ENCODE measurements at regions of chr3 and their contacts with region 1.

Region 1: GRCh38 chr3:182713743-182714517 is 79.4 kb upstream of the ATP11B start:
- DNase-seq: peak; percentile 62
- H3K4me3 ChIP-seq: no peak overlapping the region
- H3K27ac ChIP-seq: no peak overlapping the region
- H3K4me1 ChIP-seq: no peaks in the 10 kb centered on the region; a peak in 1 of 4 replicates
- H3K27me3 ChIP-seq: no peaks in the 10 kb centered on the region
- CTCF ChIP-seq: peak; percentile 69
- EP300 ChIP-seq: no peak
- RAD21 ChIP-seq: peak; percentile 93

Region 2: DNA sequence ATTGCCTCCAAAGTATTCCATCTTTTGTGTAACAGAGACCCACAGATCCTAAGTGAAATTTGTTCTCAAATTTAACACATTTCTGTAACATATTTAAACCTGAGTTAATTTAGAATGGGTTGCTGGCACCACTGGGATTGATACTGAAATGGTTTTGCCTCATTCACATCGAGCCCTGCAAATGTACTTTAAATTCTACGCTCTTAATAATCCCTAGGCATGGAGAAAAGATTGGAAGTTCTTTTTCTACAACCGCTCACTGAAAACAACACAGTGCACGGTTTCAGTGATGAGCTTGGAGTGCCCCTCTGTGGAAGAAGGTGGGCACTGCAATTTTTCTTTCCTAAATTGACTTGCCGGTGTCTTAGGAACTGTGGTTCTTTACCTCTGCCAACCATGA is 30.5 kb before region 1 on chr3:
- CTCF ChIA-PET with region 1: interaction called, 10 read pairs
- POLR2A ChIA-PET with region 1: no interaction called
- DNase-seq: peak; percentile 75
- H3K4me3 ChIP-seq: no peak overlapping the region; a peak in 1 of 4 replicates
- H3K27ac ChIP-seq: no peak overlapping the region
- H3K4me1 ChIP-seq: no peaks in the 10 kb centered on the region; a peak in 1 of 4 replicates
- H3K27me3 ChIP-seq: no peaks in the 10 kb centered on the region
- CTCF ChIP-seq: peak; percentile 96
- EP300 ChIP-seq: no peak
- RAD21 ChIP-seq: peak; percentile 98

Region 3: GRCh38 chr3:182725372-182726251 is 11.7 kb after region 1 on chr3:
- CTCF ChIA-PET with region 1: interaction called, 19 read pairs
- POLR2A ChIA-PET with region 1: no interaction called
- DNase-seq: peak; percentile 73
- H3K4me3 ChIP-seq: peak overlapping the region in 1 of 2 experiments; percentile 12; a peak in 2 of 4 replicates
- H3K27ac ChIP-seq: peak overlapping the region in 1 of 2 experiments; percentile 25; a peak in 1 of 4 replicates
- H3K4me1 ChIP-seq: peaks cover 11 to 14% of the 10 kb centered on the region in 2 experiments; a peak in 2 of 4 replicates
- H3K27me3 ChIP-seq: no peaks in the 10 kb centered on the region
- CTCF ChIP-seq: no peak
- EP300 ChIP-seq: 0 out of 4 replicates have a peak, but pooled peaks of 1 of the 2 experiments have one; percentile 16
- RAD21 ChIP-seq: no peak

Region 4: GRCh38 chr3:182740710-182741109 is 26.8 kb after region 1 on chr3:
- CTCF ChIA-PET with region 1: no interaction called
- POLR2A ChIA-PET with region 1: no interaction called
- DNase-seq: no peak
- H3K4me3 ChIP-seq: no peak overlapping the region
- H3K27ac ChIP-seq: peak overlapping the region in 1 of 2 experiments; percentile 17; a peak in 1 of 4 replicates
- H3K4me1 ChIP-seq: peaks cover 0 to 18% of the 10 kb centered on the region in 2 experiments; a peak in 1 of 4 replicates
- H3K27me3 ChIP-seq: no peaks in the 10 kb centered on the region
- CTCF ChIP-seq: no peak
- EP300 ChIP-seq: no peak
- RAD21 ChIP-seq: no peak

Region 5: GRCh38 chr3:182792901-182793662 is 79.2 kb after region 1 on chr3 and contains the start of gene ATP11B:
- CTCF ChIA-PET with region 1: interaction called, 14 read pairs
- POLR2A ChIA-PET with region 1: no interaction called
- DNase-seq: peak; percentile 96
- H3K4me3 ChIP-seq: peak within 1 kb of the TSS; percentile 75 to 90
- H3K27ac ChIP-seq: peak within 1 kb of the TSS; percentile 80 to 92
- H3K4me1 ChIP-seq: peaks cover 8 to 17% of the 10 kb centered on the region in 2 experiments
- H3K27me3 ChIP-seq: no peaks in the 10 kb centered on the region
- CTCF ChIP-seq: no peak
- EP300 ChIP-seq: no peak
- RAD21 ChIP-seq: no peak
- polyA plus RNA-seq, gene ATP11B: 8.7 and 11.1 TPM in 2 replicates

Region 6: GRCh38 chr3:182837855-182838454 is 124.0 kb after region 1 on chr3:
- CTCF ChIA-PET with region 1: interaction called, 19 read pairs
- POLR2A ChIA-PET with region 1: no interaction called
- DNase-seq: peak; percentile 5
- H3K4me3 ChIP-seq: no peak overlapping the region
- H3K27ac ChIP-seq: no peak overlapping the region
- H3K4me1 ChIP-seq: no peaks in the 10 kb centered on the region; a peak in 2 of 4 replicates
- H3K27me3 ChIP-seq: no peaks in the 10 kb centered on the region
- CTCF ChIP-seq: peak; percentile 70
- EP300 ChIP-seq: no peak
- RAD21 ChIP-seq: peak; percentile 57

Region 7: DNA sequence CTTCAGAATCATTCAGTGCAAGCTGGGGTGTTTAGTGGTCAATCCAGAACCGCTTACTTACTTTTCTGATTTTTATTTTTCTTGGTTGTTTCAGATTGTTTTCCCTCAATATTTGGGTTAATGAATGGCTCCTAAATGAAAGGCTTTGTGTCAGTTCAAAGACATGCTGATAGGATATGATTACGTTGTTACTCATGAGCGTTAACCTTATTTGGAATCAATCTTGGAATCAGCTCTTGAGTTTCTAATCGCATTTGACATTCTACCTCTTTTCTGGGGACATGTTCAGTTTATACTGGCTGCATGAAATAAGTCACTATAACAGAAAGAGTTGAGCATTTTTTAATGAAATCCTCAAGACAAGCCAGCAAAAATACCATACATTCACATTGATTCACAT is 129.5 kb after region 1 on chr3:
- CTCF ChIA-PET with region 1: interaction called, 12 read pairs
- POLR2A ChIA-PET with region 1: no interaction called
- DNase-seq: no peak
- H3K4me3 ChIP-seq: no peak overlapping the region
- H3K27ac ChIP-seq: peak overlapping the region in 1 of 2 experiments; percentile 30; a peak in 2 of 4 replicates
- H3K4me1 ChIP-seq: no peaks in the 10 kb centered on the region; a peak in 2 of 4 replicates
- H3K27me3 ChIP-seq: no peaks in the 10 kb centered on the region
- CTCF ChIP-seq: no peak
- EP300 ChIP-seq: no peak
- RAD21 ChIP-seq: no peak